B cell (primary cell): ENCODE measurements at regions of chr10 and their contacts with region 1.

Region 1: DNA sequence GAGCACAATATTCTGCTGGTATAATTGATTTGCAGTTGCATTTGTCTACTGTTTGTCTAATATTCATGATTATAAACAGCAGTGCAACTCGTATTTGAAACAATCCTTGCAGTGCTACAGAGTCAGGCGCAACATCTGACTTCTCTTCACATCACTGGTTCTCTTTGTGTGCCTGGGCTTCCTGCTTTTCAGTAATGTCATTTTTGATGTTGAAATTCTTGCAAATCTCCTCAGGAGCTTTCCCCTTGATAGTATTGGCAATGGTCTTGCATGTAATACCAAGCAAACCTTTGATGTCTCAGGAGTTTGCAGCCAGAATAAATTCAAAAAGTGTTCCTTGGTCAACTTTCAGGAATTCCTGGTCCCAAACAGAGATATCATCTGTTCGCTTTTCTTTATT is 20.2 kb downstream of the HPS6 start:
- DNase-seq: no peak
- ATAC-seq: no peak
- H3K4me3 ChIP-seq: no peak overlapping the region
- H3K4me3 Mint-ChIP-seq: no peak overlapping the region
- H3K27ac ChIP-seq: no peak overlapping the region
- H3K27ac Mint-ChIP-seq: no peak overlapping the region
- H3K4me1 ChIP-seq: no peaks in the 10 kb centered on the region
- H3K4me1 Mint-ChIP-seq: no peaks in the 10 kb centered on the region
- H3K27me3 ChIP-seq: no peaks in the 10 kb centered on the region
- H3K27me3 Mint-ChIP-seq: no peaks in the 10 kb centered on the region
- CTCF ChIP-seq: no peak

Region 2: GRCh38 chr10:100470367-100470766 is 1615.0 kb before region 1 on chr10:
- CTCF ChIA-PET with region 1: no interaction called
- POLR2A ChIA-PET with region 1: interaction called, 10 read pairs
- intact Hi-C with region 1: no loop called
- DNase-seq: no peak
- ATAC-seq: no peak
- H3K4me3 ChIP-seq: no peak overlapping the region
- H3K4me3 Mint-ChIP-seq: no peak overlapping the region
- H3K27ac ChIP-seq: no peak overlapping the region
- H3K27ac Mint-ChIP-seq: no peak overlapping the region
- H3K4me1 ChIP-seq: no peaks in the 10 kb centered on the region
- H3K4me1 Mint-ChIP-seq: no peaks in the 10 kb centered on the region
- H3K27me3 ChIP-seq: peaks cover 0 to 12% (median 1%) of the 10 kb centered on the region in 4 experiments
- H3K27me3 Mint-ChIP-seq: peaks cover 44% of the 10 kb centered on the region
- CTCF ChIP-seq: no peak

Region 3: GRCh38 chr10:102096449-102096848 is 11.1 kb after region 1 on chr10:
- CTCF ChIA-PET with region 1: no interaction called
- POLR2A ChIA-PET with region 1: no interaction called
- intact Hi-C with region 1: no loop called
- DNase-seq: no peak
- ATAC-seq: no peak
- H3K4me3 ChIP-seq: no peak overlapping the region
- H3K4me3 Mint-ChIP-seq: no peak overlapping the region
- H3K27ac ChIP-seq: no peak overlapping the region
- H3K27ac Mint-ChIP-seq: no peak overlapping the region
- H3K4me1 ChIP-seq: no peaks in the 10 kb centered on the region
- H3K4me1 Mint-ChIP-seq: no peaks in the 10 kb centered on the region
- H3K27me3 ChIP-seq: no peaks in the 10 kb centered on the region
- H3K27me3 Mint-ChIP-seq: no peaks in the 10 kb centered on the region
- CTCF ChIP-seq: no peak